Panc1 (cell line): ENCODE measurements at regions of chr5 and their contacts with region 1.

Region 1: DNA sequence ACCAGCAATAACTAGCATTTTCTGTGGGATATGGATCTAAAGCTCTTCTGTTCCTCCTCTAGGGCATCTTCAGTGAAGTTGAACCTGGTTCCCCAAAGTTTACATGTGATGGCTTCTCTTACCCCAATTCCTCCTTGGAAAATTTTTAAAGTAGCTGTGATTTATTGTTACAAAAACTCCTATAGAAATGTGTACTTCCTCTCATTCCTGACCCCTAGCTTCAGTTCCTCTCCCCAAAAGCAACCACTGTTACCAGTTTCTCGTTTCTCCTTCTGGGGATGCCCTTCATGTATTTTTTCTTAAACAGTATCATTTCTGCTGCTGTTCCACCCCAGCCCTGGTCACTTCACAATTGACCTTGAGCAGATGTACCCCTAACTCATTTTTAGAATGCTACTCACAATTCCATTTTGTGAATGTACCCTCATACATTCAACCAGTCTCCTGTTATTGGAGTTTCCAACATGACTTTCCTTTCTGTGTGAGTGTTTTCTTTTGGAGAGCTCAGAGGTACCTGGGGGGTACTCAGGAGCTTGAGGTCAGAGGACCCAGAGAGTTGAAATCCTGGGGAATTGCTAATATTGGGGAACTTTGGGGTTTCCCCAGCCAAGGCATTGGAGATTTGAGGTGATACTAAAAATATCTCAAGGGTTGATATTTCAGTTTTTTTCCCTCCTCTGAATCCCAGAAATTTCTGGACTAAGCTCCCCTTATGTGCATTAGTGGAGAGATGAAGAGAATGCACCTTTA is 18.6 kb upstream of the GLRX start:
- DNase-seq: no peak
- ATAC-seq: no peak
- H3K4me3 ChIP-seq: no peak overlapping the region
- H3K27ac ChIP-seq: no peak overlapping the region
- H3K4me1 ChIP-seq: no peaks in the 10 kb centered on the region; the same call in 1 of the 2 replicates
- H3K27me3 ChIP-seq: no peaks in the 10 kb centered on the region
- CTCF ChIP-seq: no peak

Region 2: DNA sequence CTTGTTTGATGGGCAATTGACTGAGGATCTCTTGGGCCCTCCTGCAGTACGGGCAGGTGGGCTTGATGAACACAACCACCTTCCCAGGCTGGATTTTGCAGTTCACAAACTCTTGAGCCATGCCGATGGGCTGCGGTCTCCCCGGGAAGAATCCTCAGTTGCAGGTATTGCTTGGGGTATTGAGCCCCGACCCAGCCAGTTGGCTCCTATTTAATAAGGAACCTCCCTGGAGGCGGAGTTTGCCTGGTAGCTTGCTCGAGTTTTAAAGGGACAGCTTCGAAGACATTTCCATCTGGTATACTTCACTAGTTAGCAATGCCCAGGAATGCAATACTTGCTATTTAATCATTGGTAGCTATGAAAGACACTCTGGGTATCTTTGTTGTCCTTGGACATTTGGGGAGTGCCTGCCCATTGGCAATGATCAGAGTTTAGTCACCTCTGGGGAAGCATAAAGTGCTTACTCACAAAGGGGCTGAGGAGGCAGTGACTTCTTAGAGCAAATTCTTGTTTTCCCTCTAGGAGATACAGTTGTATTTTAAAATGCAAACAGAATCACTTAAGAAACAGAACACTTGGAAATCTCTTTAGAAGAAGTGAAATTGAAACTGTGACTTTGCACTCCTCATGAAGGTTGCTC is 18.5 kb before region 1 on chr5 and contains the start of gene GLRX:
- CTCF ChIA-PET with region 1: no interaction called
- POLR2A ChIA-PET with region 1: interaction called, 11 read pairs
- in situ Hi-C with region 1: no loop called
- intact Hi-C with region 1: no loop called
- DNase-seq: peak; percentile 64
- ATAC-seq: peak; percentile 90
- H3K4me3 ChIP-seq: peak within 1 kb of the TSS; percentile 77 to 96
- H3K27ac ChIP-seq: peak within 1 kb of the TSS; percentile 32
- H3K4me1 ChIP-seq: peaks cover 23% of the 10 kb centered on the region
- H3K27me3 ChIP-seq: no peaks in the 10 kb centered on the region
- CTCF ChIP-seq: no peak
- total RNA-seq, gene GLRX: 5.8 TPM

Region 3: GRCh38 chr5:95892780-95893354 is 51.7 kb after region 1 on chr5:
- CTCF ChIA-PET with region 1: no interaction called
- POLR2A ChIA-PET with region 1: no interaction called
- in situ Hi-C with region 1: no loop called
- intact Hi-C with region 1: no loop called
- DNase-seq: no peak
- ATAC-seq: peak; percentile 90
- H3K4me3 ChIP-seq: no peak overlapping the region
- H3K27ac ChIP-seq: no peak overlapping the region
- H3K4me1 ChIP-seq: no peaks in the 10 kb centered on the region
- H3K27me3 ChIP-seq: no peaks in the 10 kb centered on the region
- CTCF ChIP-seq: peak; percentile 75

Region 4: DNA sequence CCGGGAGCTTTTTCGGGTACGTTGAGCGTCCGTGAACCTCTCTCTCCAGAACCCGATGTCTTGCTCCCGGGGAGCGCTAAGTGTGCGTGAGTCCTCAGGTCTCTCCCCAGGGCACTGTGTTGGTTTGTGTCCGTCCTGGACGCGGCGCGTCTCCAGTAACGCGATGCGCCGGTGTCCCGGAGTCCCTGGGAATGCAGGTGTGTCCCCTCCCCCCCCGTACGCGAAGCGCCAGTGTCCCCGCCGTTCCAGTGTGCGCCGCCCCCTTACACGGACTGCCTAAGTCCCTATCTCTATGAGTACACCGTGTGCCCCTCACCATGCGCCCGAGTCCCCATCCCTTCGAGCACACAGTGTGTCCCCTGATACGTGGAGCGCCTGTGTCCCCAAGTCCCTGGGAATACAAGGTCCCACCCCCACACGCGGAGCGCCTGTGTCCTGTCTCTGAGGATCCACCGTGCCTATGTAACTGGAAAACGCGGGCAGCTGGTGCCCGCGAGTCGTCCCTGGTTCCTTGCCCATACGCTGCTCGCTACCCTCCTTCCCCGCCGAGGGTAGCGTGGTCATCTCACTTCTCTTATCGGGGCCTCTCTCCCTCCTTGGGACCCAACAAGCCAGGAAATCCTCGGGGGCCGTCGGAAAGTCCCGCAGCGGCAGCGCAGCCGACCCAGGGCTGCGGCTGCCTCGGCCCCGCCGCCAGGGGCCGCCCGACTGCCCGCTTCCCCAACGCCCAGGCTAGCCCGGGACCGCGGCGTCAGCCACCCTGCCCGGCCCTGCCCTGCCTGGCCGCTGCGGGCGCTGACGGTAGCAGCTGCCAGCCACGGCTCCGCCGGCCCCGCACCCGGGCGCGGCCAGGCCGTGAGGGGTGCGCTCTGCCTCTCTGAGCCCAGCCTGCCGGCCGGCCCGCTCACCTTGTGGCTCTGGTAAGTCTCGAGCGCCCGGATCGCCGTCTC is 119.8 kb after region 1 on chr5:
- CTCF ChIA-PET with region 1: no interaction called
- POLR2A ChIA-PET with region 1: no interaction called
- in situ Hi-C with region 1: no loop called
- intact Hi-C with region 1: no loop called
- DNase-seq: peak; percentile 24
- ATAC-seq: peak; percentile 80
- H3K4me3 ChIP-seq: peak overlapping the region; percentile 98
- H3K27ac ChIP-seq: peak overlapping the region; percentile 94
- H3K4me1 ChIP-seq: peaks cover 33% of the 10 kb centered on the region
- H3K27me3 ChIP-seq: no peaks in the 10 kb centered on the region
- CTCF ChIP-seq: peak; percentile 97